ENCODE measurements at regions of chr13 and their contacts with region 1.

Region 1: DNA sequence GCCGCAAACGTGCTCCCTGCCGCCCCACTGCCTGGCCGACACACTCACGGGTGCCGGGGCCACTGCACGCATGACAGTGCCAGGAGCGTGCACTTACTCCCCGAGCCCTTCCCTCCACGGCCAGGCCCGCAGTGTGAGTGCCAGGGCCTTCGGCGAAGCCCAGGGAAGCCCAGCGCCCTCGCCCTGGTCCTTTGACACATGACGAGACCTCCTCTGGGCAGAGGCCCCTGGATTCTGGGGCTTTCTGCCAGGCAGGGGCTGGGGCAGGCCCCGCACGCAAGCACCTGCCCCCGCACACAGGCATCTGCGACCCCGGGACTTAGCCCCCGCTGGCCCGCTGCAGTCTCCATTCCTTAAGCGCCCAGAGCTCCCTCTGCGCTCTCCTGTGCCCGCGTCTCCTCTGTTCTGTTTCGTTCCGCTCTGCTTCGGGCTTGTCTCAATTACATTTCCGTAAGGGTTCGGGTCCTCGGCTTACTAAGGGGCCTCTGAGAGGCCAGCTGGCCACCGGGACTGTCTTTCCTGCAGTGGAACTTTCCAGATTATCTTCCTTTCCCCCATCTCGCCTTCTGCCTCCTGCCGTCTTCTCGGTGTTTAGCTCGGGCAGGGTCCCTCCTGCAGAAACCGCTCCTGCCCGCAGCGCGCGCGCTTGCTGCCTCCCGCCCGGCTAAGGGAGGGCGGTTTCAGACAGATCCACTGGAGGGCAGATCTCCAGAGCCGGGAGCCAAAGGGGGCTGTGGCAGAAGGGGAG is 98.8 kb downstream of the ING1 start:
- DNase-seq: no peak
- H3K4me3 ChIP-seq: no peak overlapping the region
- H3K27ac ChIP-seq: no peak overlapping the region
- H3K4me1 ChIP-seq: no peaks in the 10 kb centered on the region
- H3K27me3 ChIP-seq: peaks cover 6% of the 10 kb centered on the region
- CTCF ChIP-seq: no peak

Region 2: DNA sequence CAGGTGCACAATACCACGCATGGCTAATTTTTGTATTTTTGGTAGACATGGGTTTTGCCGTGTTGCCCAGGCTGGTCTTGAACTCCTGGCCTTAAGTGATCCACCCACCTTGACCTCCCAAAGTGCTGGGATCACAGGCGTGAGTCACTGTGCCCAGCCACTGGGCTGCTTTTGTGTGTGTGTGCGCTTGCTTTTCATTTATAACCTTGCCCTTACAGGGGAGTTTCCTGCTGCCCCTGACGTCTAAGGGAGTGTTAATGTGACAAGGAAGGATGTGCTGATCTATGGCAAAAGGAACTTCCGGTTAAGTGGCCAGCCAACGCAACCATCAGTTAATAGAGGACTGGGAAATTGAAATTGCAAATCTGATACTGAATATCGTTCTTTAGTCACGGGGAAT is 41.1 kb before region 1 on chr13:
- CTCF ChIA-PET with region 1: no interaction called
- dilution Hi-C with region 1: loop called (anchors 5 kb)
- in situ Hi-C with region 1: no loop called
- intact Hi-C with region 1: no loop called
- DNase-seq: no peak
- H3K4me3 ChIP-seq: no peak overlapping the region
- H3K27ac ChIP-seq: no peak overlapping the region
- H3K4me1 ChIP-seq: no peaks in the 10 kb centered on the region
- H3K27me3 ChIP-seq: no peaks in the 10 kb centered on the region
- CTCF ChIP-seq: no peak

Region 3: DNA sequence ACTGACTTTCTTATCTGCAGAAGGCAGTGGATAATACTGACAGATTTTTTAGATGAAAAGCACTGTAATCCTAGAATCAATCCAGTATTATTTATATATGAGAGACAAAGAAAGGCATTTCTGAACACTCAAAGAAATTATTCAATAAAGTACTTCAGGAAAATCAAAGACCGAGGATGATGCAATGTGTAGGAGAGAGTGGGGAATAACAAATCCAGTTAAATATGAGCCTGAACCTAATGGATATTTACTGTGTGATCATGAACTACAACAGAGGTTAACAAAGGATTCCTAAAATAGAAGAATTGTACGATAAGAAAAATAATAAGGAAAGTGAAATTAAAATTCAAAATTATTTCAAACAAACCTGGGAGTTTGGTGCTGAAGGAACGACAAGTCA is 33.2 kb after region 1 on chr13:
- CTCF ChIA-PET with region 1: no interaction called
- dilution Hi-C with region 1: loop called (anchors 5 kb)
- in situ Hi-C with region 1: no loop called
- intact Hi-C with region 1: no loop called
- DNase-seq: no peak
- H3K4me3 ChIP-seq: no peak overlapping the region
- H3K27ac ChIP-seq: no peak overlapping the region
- H3K4me1 ChIP-seq: peaks cover 14% of the 10 kb centered on the region
- H3K27me3 ChIP-seq: peaks cover 9% of the 10 kb centered on the region
- CTCF ChIP-seq: no peak

Region 4: GRCh38 chr13:111095031-111095840 is 282.9 kb after region 1 on chr13:
- CTCF ChIA-PET with region 1: no interaction called
- dilution Hi-C with region 1: no loop called
- in situ Hi-C with region 1: no loop called
- intact Hi-C with region 1: no loop called
- DNase-seq: no peak
- H3K4me3 ChIP-seq: no peak overlapping the region
- H3K27ac ChIP-seq: no peak overlapping the region
- H3K4me1 ChIP-seq: peaks cover 3% of the 10 kb centered on the region
- H3K27me3 ChIP-seq: peaks cover 2% of the 10 kb centered on the region
- CTCF ChIP-seq: no peak